T-cell (primary cell): ENCODE measurements at regions of chr7 and their contacts with region 1.

Region 1: GRCh38 chr7:73936967-73937366 is 76.0 kb downstream of the TMEM270 start:
- DNase-seq: no peak
- ATAC-seq: no peak
- H3K4me3 ChIP-seq: no peak overlapping the region
- H3K4me3 Mint-ChIP-seq: no peak overlapping the region
- H3K27ac ChIP-seq: no peak overlapping the region
- H3K27ac Mint-ChIP-seq: no peak overlapping the region
- H3K4me1 ChIP-seq: no peaks in the 10 kb centered on the region
- H3K4me1 Mint-ChIP-seq: no peaks in the 10 kb centered on the region
- H3K27me3 ChIP-seq: peaks cover 0 to 13% of the 10 kb centered on the region in 2 experiments
- H3K27me3 Mint-ChIP-seq: peaks cover 10 to 20% of the 10 kb centered on the region in 2 donors

Region 2: GRCh38 chr7:73909051-73909941 is 27.7 kb before region 1 on chr7:
- CTCF ChIA-PET with region 1: no interaction called
- POLR2A ChIA-PET with region 1: interaction called in 1 of 2 experiments, 11 read pairs
- DNase-seq: peak in 1 of 35 experiments; percentile 18
- ATAC-seq: no peak
- H3K4me3 ChIP-seq: no peak overlapping the region
- H3K4me3 Mint-ChIP-seq: no peak overlapping the region
- H3K27ac ChIP-seq: no peak overlapping the region
- H3K27ac Mint-ChIP-seq: no peak overlapping the region
- H3K4me1 ChIP-seq: no peaks in the 10 kb centered on the region
- H3K4me1 Mint-ChIP-seq: no peaks in the 10 kb centered on the region
- H3K27me3 ChIP-seq: peaks cover 0 to 17% of the 10 kb centered on the region in 2 experiments
- H3K27me3 Mint-ChIP-seq: peaks cover 7 to 20% of the 10 kb centered on the region in 2 donors

Region 3: DNA sequence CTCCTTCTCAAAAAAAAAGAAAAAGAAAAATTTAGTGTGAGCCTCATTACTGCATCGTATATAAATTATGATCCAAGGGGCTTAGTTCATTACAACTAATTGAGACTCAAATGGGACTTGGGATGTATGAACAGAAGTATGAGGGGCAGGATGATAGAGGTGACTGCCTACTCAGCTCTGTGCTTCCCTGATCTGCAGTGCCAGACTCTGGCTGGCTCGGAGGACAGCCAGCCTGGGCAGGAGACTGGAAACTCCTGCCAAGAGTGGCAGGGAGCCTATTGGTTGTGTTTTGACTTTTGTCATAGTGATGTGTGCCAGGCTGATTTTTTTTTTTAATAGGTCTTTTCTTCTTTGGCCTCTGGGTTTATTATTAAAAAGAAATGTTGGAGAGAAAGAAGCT is 443.0 kb after region 1 on chr7:
- CTCF ChIA-PET with region 1: no interaction called
- POLR2A ChIA-PET with region 1: no interaction called
- DNase-seq: no peak
- ATAC-seq: no peak
- H3K4me3 ChIP-seq: no peak overlapping the region
- H3K4me3 Mint-ChIP-seq: no peak overlapping the region
- H3K27ac ChIP-seq: no peak overlapping the region
- H3K27ac Mint-ChIP-seq: no peak overlapping the region
- H3K4me1 ChIP-seq: no peaks in the 10 kb centered on the region
- H3K4me1 Mint-ChIP-seq: no peaks in the 10 kb centered on the region
- H3K27me3 ChIP-seq: no peaks in the 10 kb centered on the region
- H3K27me3 Mint-ChIP-seq: no peaks in the 10 kb centered on the region